CD4-positive, alpha-beta memory T cell (primary cell): ENCODE measurements at regions of chr11 and their contacts with region 1.

Region 1: DNA sequence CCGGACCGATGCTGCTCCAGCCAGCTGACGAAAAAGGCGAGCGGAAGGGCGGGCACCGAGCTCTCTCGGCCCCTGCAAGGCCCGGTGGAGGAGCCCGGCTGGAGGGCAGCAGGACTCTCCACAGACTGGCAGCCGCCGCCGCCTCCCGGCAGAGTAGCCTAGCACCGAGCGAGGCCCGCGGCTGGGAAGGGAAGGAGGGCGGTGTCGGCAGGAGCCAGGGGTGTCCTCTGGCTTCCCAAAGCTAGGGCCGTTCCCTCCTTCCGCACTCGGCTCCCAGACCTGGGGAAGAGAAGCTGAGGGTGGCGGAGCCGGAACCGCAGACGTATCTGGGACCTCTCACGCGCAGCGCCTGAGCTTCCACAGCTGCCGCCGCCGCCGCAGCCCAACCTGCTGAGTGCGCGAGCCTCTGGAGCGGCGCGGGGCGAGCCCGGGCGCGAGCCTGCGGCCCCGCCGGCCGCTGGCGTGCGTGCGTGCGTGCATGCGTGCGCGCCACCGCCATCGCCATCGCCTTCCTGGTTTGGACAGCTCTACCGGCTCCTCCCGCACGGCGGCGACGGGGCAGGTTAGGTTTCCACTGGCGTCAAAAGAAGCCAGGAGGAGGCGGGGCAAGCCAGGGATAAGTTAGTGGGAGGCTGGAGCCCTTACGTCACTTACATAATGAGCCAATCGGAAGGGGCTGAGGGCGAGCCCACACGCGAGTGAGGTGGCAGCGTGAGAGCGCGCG is at the start of gene RAB6A:
- DNase-seq: peak; percentile 99 to 100 (median 100)
- H3K4me3 ChIP-seq: peak within 1 kb of the TSS; percentile 73 to 77
- H3K4me3 Mint-ChIP-seq: peak within 1 kb of the TSS; percentile 85 to 96 (median 91)
- H3K27ac ChIP-seq: peak within 1 kb of the TSS; percentile 81
- H3K27ac Mint-ChIP-seq: peak within 1 kb of the TSS; percentile 87 to 97 (median 96)
- H3K4me1 ChIP-seq: peaks cover 35% of the 10 kb centered on the region
- H3K4me1 Mint-ChIP-seq: peaks cover 21 to 43% (median 34%) of the 10 kb centered on the region in 4 donors
- H3K27me3 ChIP-seq: no peaks in the 10 kb centered on the region
- H3K27me3 Mint-ChIP-seq: no peaks in the 10 kb centered on the region
- total RNA-seq, gene RAB6A: 102 to 118 TPM

Region 2: DNA sequence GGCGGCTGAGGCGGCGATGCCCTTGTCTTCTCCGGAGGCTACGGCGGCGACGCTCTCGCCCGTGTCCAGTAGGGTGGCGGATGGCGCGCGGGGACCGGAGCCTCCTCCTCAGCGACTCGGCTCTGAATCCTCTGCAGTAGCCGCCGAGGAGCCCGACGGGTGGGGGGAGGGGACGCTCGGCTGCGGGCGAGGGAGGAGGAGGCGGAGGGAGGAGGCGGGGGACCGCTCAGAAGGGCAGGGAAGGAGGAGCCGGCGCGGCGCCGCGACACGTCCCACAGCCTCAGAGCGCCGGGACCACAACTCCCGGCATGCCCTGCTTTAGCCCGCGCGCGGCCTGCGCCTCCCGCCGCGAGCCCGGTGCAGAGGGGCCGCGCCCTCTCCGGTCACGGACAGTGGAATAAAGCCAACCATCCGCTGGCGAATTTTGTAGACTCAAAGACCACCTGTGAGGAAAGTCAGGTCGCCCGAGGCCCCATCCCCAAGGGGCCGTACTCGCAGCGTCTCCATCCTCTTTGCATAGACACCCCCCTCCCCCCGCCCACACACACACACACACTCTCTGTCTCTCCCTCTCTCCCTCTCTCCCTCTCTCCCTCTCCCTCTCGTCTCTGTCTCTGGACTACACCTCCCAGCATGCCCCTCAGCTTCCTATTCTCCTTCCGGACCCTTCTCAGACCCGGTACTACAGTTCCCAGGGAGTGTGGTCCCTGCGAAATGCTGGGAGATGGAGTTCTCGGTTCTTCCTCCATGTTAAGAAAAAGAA is 162.7 kb before region 1 on chr11 and contains the start of gene FAM168A:
- CTCF ChIA-PET with region 1: no interaction called
- POLR2A ChIA-PET with region 1: interaction called, 15 read pairs
- intact Hi-C with region 1: loop called (anchors 1 kb)
- DNase-seq: peak; percentile 91 to 95 (median 92)
- H3K4me3 ChIP-seq: peak within 1 kb of the TSS; percentile 54 to 94
- H3K4me3 Mint-ChIP-seq: peak within 1 kb of the TSS; percentile 92 to 96 (median 94)
- H3K27ac ChIP-seq: peak within 1 kb of the TSS; percentile 78
- H3K27ac Mint-ChIP-seq: peak within 1 kb of the TSS; percentile 92 to 98 (median 96)
- H3K4me1 ChIP-seq: peaks cover 24% of the 10 kb centered on the region
- H3K4me1 Mint-ChIP-seq: peaks cover 22 to 39% (median 31%) of the 10 kb centered on the region in 4 donors
- H3K27me3 ChIP-seq: no peaks in the 10 kb centered on the region
- H3K27me3 Mint-ChIP-seq: no peaks in the 10 kb centered on the region
- total RNA-seq, gene FAM168A: 21.9 to 22.7 TPM

Region 3: GRCh38 chr11:73729594-73730206 is 31.1 kb before region 1 on chr11:
- CTCF ChIA-PET with region 1: no interaction called
- POLR2A ChIA-PET with region 1: no interaction called
- intact Hi-C with region 1: no loop called
- DNase-seq: no peak
- H3K4me3 ChIP-seq: no peak overlapping the region
- H3K4me3 Mint-ChIP-seq: no peak overlapping the region
- H3K27ac ChIP-seq: no peak overlapping the region
- H3K27ac Mint-ChIP-seq: peak overlapping the region in 5 of 7 donors; percentile 53 to 83 (median 70)
- H3K4me1 ChIP-seq: peaks cover 4% of the 10 kb centered on the region
- H3K4me1 Mint-ChIP-seq: peaks cover 24 to 42% (median 33%) of the 10 kb centered on the region in 4 donors
- H3K27me3 ChIP-seq: no peaks in the 10 kb centered on the region
- H3K27me3 Mint-ChIP-seq: no peaks in the 10 kb centered on the region

Region 4: GRCh38 chr11:73779084-73779902 is 18.5 kb after region 1 on chr11:
- CTCF ChIA-PET with region 1: interaction called, 25 read pairs
- POLR2A ChIA-PET with region 1: interaction called, 278 read pairs
- intact Hi-C with region 1: loop called (anchors 1 kb)
- DNase-seq: peak; percentile 97 to 98 (median 98)
- H3K4me3 ChIP-seq: peak overlapping the region; percentile 58 to 62
- H3K4me3 Mint-ChIP-seq: peak overlapping the region; percentile 91 to 97 (median 94)
- H3K27ac ChIP-seq: peak overlapping the region; percentile 90
- H3K27ac Mint-ChIP-seq: peak overlapping the region; percentile 96 to 100 (median 100)
- H3K4me1 ChIP-seq: peaks cover 5% of the 10 kb centered on the region
- H3K4me1 Mint-ChIP-seq: peaks cover 6 to 13% (median 7%) of the 10 kb centered on the region in 4 donors
- H3K27me3 ChIP-seq: no peaks in the 10 kb centered on the region
- H3K27me3 Mint-ChIP-seq: peaks cover 0 to 4% of the 10 kb centered on the region in 2 donors

Region 5: DNA sequence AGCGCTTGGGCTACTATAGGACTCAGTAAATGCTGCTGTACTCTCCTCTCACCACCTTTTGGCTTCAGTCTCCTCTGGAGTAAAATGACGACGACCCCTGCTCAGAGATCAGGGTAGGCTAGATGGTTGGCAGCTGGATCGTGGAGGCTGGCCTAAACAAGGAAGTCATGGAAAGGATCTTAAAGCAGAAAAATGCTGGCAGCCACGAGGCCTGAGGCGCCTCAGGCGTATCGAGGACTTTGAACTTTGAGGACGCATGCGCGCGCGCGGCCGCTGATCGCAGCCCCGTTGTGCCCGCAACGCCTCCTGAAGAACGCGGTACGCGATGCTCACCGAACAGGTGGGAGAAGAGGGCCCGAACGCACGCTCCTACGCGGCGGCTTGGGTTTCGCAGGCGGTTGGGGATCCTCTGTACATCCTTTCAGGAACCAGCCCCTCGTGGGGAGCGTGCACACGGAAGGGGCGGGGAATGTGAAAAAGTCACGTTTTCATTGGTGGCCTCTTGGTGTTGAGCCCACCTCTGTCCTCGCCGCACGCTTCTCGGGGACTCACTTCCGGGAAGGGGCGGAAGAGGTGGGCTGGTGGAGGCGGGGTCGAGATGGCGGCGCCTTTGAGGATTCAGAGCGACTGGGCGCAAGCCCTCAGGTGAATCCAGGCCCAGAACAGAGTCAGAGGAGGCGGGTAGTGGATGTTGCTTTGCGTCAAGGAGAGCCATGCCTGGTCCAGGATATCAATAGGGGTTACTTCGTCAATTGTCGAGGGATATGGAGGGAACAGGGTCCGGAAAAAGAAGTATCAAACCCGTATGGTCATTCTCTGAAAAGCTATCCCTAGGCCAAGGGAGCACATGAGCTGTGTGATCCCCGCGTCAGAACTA is 115.8 kb after region 1 on chr11 and contains the starts of genes COA4 and PAAF1:
- CTCF ChIA-PET with region 1: no interaction called
- POLR2A ChIA-PET with region 1: interaction called, 5 read pairs
- intact Hi-C with region 1: loop called (anchors 1 kb)
- DNase-seq: peak; percentile 93 to 97 (median 94)
- H3K4me3 ChIP-seq: peak within 1 kb of the TSS; percentile 85 to 90
- H3K4me3 Mint-ChIP-seq: peak within 1 kb of the TSS; percentile 98 to 100 (median 100)
- H3K27ac ChIP-seq: peak within 1 kb of the TSS; percentile 86
- H3K27ac Mint-ChIP-seq: peak within 1 kb of the TSS; percentile 95 to 100 (median 99)
- H3K4me1 ChIP-seq: peaks cover 32% of the 10 kb centered on the region
- H3K4me1 Mint-ChIP-seq: peaks cover 16 to 50% (median 31%) of the 10 kb centered on the region in 4 donors
- H3K27me3 ChIP-seq: no peaks in the 10 kb centered on the region
- H3K27me3 Mint-ChIP-seq: no peaks in the 10 kb centered on the region
- total RNA-seq, gene COA4: 59.0 to 61.4 TPM
- total RNA-seq, gene PAAF1: 18.8 to 19.1 TPM

Region 6: GRCh38 chr11:74398244-74399159 is 637.7 kb after region 1 on chr11 and contains the start of gene PGM2L1:
- CTCF ChIA-PET with region 1: no interaction called
- POLR2A ChIA-PET with region 1: no interaction called
- intact Hi-C with region 1: loop called (anchors 1 kb)
- DNase-seq: peak; percentile 93 to 96 (median 95)
- H3K4me3 ChIP-seq: peak within 1 kb of the TSS; percentile 81 to 83
- H3K4me3 Mint-ChIP-seq: peak within 1 kb of the TSS; percentile 99 to 100 (median 100)
- H3K27ac ChIP-seq: peak within 1 kb of the TSS; percentile 80
- H3K27ac Mint-ChIP-seq: peak within 1 kb of the TSS; percentile 92 to 100 (median 99)
- H3K4me1 ChIP-seq: peaks cover 20% of the 10 kb centered on the region
- H3K4me1 Mint-ChIP-seq: peaks cover 16 to 37% (median 27%) of the 10 kb centered on the region in 4 donors
- H3K27me3 ChIP-seq: no peaks in the 10 kb centered on the region
- H3K27me3 Mint-ChIP-seq: no peaks in the 10 kb centered on the region
- total RNA-seq, gene PGM2L1: 10.4 to 11.2 TPM